ENCODE measurements at regions of chrX and their contacts with region 1.

Region 1: DNA sequence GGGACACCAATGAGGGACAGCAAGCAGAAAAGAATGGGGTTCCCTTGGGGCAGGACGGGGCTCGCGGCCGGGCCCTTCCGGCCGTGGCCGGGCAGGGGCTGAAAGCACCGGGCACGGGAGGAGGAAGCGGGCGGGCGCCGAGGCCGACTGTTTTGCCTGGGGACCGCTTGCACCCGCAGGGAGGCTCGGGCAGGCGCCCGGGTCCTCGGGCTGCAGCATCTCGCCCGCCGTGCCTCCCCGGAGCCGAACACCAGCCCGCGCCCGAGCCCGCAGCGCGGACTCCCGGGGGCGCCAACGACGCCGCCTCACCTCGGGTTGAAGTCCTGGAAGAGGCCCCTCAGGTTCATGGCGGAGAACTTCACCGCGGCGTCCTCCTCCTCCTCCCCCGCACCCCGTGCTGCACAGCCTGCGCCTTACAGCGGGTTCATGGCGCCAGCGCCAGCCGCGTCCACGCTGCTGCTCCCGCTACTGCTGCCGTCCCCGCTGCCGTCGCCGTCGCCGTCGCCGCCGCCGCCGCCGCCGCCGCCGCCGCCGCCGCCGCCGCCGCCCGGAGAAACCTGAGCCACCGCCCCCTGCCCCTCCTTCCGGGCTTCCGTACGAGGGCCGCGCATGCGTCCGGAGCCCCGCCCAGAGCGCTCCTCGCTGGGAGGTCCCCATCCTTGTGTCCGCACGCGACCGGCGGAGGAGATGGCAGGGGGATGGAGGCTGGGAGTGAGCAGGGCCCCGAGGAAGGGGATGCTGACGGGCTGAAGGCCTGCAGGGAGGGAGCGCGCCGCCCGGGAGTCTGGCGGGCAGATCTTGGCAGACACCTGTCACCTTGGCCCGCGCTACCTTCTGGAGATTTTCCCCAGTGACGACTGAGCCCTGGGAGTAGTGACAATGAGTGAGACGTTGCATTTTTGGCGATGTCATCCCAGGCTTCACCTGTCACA is at the start of gene TMEM185A:
- DNase-seq: peak; percentile 66 to 85 (median 80)
- ATAC-seq: peak; percentile 33 to 85 (median 80)
- H3K4me3 ChIP-seq: peak within 1 kb of the TSS; percentile 59 to 97 (median 78)
- H3K27ac ChIP-seq: peak within 1 kb of the TSS; percentile 47 to 83 (median 80)
- H3K4me1 ChIP-seq: peaks cover 0 to 26% (median 10%) of the 10 kb centered on the region in 12 donors
- H3K27me3 ChIP-seq: no peaks in the 10 kb centered on the region
- CTCF ChIP-seq: no peak
- POLR2A ChIP-seq: no peak
- total RNA-seq, gene TMEM185A: 25.9 to 39.2 (median 33.9) TPM

Region 2: DNA sequence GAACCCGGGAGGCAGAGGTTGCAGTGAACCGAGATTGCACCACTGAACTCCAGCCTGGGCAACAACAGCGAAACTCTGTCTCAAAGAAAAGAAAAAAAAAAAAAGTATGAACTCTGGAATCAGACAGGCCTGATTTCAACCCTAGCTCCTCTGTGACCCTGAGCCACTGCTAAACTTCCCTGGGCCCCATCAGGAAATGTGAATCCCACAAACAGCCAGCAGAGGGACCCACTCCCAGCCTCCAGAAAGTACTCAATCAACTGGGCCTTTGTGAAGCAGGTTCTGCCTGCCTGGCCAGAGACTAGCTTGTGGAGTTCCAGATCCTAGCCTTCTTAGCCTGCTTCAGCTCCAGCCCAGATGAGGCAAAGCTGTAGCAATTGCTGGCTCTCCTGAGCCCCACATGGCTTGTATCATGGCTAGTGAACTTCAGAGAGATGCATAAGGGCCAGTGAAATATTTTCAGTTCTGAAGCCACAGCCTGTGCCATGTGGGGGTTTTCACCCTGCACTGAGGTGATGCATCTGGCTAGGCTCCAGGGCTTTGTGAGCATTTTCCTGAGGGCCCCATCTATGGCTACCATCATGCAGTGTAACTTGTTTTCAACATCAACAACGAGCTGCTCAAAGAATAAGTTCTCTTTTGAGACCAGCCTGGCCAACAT is 119.1 kb before region 1 on chrX:
- intact Hi-C with region 1: no loop called
- DNase-seq: peak in 4 of 5 donors; percentile 31 to 53 (median 40)
- ATAC-seq: peak; percentile 59 to 77 (median 64)
- H3K4me3 ChIP-seq: no peak overlapping the region
- H3K27ac ChIP-seq: no peak overlapping the region
- H3K4me1 ChIP-seq: peaks cover 0 to 19% (median 0%) of the 10 kb centered on the region in 12 donors
- H3K27me3 ChIP-seq: peaks cover 0 to 9% (median 0%) of the 10 kb centered on the region in 9 donors
- CTCF ChIP-seq: peak; percentile 40 to 61 (median 50)
- POLR2A ChIP-seq: no peak

Region 3: GRCh38 chrX:149569770-149570169 is 61.7 kb before region 1 on chrX:
- intact Hi-C with region 1: loop called in 1 of 10 experiments (anchors 10 kb)
- DNase-seq: no peak
- ATAC-seq: no peak
- H3K4me3 ChIP-seq: no peak overlapping the region
- H3K27ac ChIP-seq: no peak overlapping the region
- H3K4me1 ChIP-seq: peaks cover 0 to 10% (median 0%) of the 10 kb centered on the region in 12 donors
- H3K27me3 ChIP-seq: no peaks in the 10 kb centered on the region
- CTCF ChIP-seq: no peak
- POLR2A ChIP-seq: no peak

Measured in heart left ventricle (tissue), 16 donors.